Activated CD4-positive, alpha-beta memory T cell treated with anti-CD3 and anti-CD28 coated beads for 36 hours (primary cell): ENCODE measurements at regions of chrX and their contacts with region 1.

Region 1: DNA sequence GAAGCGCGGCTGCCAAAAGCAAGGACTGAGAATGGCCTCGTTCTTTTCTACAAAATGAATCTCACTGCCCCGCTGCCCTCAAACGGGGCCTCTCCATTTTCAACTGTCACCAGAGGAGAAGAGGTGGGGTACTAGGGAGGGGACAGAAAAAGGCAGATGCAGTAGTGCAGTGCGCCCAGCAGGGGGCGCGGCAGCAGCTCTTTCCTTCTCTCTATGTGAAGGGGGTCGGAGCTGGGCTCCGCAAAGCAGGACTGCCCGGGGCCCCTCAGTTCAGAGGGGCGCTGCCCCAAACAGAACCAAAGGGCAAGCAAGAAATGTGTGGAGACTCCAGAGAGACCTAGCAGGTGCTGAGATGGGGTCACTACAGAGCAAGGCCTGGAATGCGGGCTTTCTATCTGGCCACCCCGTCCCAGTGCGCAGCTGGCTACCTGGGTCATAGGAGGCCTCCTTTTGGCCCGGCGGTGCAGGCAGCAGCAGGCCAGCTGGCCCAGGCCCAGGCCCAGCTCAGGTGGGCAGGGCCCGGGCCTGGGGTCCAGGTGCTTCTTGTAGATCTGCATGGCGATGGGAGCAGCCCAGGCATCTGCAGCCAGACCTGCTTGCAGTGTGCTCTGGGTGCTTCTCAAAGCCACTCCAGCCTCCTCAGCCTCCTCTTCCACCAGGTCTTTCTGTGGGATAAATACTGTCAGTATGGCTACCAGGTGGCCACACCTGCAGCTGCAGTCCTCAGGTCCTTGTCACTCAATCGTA is 5.9 kb downstream of the IRAK1 start:
- DNase-seq: peak; percentile 53
- H3K4me3 Mint-ChIP-seq: no peak overlapping the region
- H3K27ac Mint-ChIP-seq: no peak overlapping the region
- H3K4me1 Mint-ChIP-seq: peaks cover 9% of the 10 kb centered on the region
- H3K27me3 Mint-ChIP-seq: no peaks in the 10 kb centered on the region

Region 2: GRCh38 chrX:154002215-154002719 is 11.5 kb before region 1 on chrX:
- CTCF ChIA-PET with region 1: interaction called, 37 read pairs
- POLR2A ChIA-PET with region 1: interaction called, 3 read pairs
- intact Hi-C with region 1: no loop called
- DNase-seq: peak; percentile 70
- H3K4me3 Mint-ChIP-seq: peak overlapping the region; percentile 65
- H3K27ac Mint-ChIP-seq: peak overlapping the region; percentile 87
- H3K4me1 Mint-ChIP-seq: peaks cover 11% of the 10 kb centered on the region
- H3K27me3 Mint-ChIP-seq: no peaks in the 10 kb centered on the region

Region 3: DNA sequence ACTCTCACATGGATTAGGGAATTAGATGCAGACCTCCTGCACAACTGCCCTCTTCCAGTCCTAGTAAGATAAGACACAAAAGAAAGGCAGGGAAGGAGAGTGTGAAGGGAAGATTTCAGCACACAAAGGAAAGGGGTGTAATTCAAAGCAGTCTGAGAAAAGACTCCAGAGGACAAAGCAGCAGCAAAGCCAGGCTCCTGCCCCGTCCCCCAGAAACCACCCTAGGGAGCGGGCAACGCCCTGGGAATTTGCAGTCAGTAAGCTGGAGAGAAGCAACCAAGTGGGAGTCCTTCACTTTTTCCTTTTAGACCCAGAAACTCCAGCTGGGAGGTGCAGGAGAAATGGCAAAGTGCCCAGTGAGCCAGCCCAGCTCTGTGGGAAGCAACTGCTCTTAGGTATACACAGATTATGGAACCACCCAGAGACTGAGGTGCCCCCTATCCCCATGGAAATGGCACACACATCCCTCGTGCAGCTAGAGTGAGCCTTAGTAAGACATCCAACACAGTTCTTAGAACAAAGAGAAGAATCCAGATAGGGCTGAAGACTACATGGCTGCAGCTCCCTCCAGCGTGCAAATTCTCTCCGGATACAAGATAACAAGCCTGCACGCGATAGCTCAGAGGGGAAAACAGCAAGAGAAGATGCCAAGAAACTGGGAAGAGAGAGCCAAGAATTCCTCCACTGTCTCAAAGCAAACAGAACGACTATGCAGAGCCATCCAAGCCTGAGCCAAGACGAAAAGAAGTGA is 32.4 kb after region 1 on chrX:
- CTCF ChIA-PET with region 1: interaction called, 10 read pairs
- POLR2A ChIA-PET with region 1: interaction called, 3 read pairs
- intact Hi-C with region 1: loop called (anchors 2 kb)
- DNase-seq: no peak
- H3K4me3 Mint-ChIP-seq: no peak overlapping the region
- H3K27ac Mint-ChIP-seq: no peak overlapping the region
- H3K4me1 Mint-ChIP-seq: peaks cover 40% of the 10 kb centered on the region
- H3K27me3 Mint-ChIP-seq: no peaks in the 10 kb centered on the region